ENCODE measurements at regions of chr20 and their contacts with region 1.

Region 1: DNA sequence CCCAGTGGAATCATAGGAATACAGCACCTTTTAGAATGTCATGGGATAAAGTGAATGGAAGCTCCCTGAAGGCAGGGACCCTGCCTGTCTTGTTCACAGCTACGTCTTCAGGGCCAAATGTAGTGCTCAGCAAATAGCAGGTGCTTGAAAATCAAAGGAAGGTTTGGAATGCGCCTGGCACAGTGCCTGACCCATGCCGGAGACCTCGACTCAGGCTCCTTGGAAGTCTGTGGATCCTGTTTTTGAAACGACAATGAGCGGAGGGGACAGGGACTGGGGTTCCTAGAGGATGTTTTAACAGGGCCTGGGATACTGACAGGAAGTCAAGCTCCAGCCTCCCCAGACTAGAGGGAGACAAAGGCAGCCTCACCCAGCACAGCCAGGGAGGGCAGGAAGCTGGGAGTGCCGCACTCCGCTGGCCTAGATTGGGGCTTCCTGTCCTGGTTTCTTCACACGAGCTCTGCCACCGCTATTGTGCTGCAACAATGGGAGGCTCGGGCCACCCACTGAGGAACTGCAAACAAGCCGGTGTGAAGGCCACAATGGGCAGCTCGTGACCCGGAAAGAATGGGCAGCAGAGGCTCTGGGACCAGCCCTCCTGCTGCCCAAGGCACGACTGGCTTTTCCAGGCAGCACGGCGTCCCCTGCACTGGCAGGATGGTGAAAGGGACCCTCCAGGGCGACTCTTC is 76.7 kb downstream of the PREX1 start:
- DNase-seq: peak; percentile 92
- H3K4me3 ChIP-seq: peak overlapping the region in 2 of 8 donors; percentile 12 to 56
- H3K27ac ChIP-seq: peak overlapping the region; percentile 36 to 97 (median 84)
- H3K4me1 ChIP-seq: peaks cover 26 to 99% (median 81%) of the 10 kb centered on the region in 6 donors
- H3K27me3 ChIP-seq: no peaks in the 10 kb centered on the region
- CTCF ChIP-seq: no peak
- POLR2A ChIP-seq: no peak

Region 2: DNA sequence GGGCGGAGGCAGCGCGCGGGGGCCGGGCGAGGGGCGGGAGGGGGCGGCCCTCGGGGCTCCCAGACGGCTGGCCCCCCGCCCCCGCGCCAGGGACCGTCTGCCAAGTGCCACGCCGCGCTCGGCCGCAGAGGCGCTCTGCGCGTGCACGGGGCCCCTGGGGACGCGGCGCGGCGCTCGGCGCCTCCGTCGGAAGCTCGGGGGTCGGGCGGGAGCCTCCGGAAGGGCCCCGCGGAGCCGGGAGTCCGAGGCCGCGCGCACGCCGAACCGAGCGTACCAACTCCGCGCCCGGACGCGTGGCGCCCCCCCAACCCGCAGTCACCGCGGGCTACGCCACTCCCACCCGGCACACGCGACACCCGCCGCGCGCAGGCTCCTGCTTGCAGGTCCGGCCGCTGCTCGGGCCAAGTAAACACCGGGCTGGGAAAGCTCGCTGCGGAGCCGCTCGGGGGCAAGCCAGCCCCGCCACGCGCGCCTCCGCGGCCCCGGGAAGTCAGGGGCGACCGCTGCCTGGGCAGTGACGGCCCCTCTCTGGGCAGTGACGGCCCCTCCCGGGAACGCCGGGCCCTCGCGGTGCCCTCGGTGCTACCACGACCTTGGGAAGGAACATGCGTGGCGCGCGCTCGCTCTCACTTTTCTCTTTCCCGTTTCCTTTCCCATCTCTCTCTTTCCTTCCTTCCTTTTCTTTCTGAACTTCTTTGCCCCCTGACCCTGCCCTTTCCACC is 77.1 kb after region 1 on chr20:
- intact Hi-C with region 1: loop called (anchors 10 kb)
- DNase-seq: peak; percentile 98
- H3K4me3 ChIP-seq: peak overlapping the region; percentile 58 to 96 (median 75)
- H3K27ac ChIP-seq: peak overlapping the region; percentile 65 to 97 (median 88)
- H3K4me1 ChIP-seq: peaks cover 39 to 92% (median 57%) of the 10 kb centered on the region in 6 donors
- H3K27me3 ChIP-seq: no peaks in the 10 kb centered on the region
- CTCF ChIP-seq: peak in 6 of 11 experiments; percentile 9 to 51 (median 47)
- POLR2A ChIP-seq: peak in 1 of 3 donors; percentile 47

Region 3: GRCh38 chr20:48839154-48839946 is 88.3 kb after region 1 on chr20:
- intact Hi-C with region 1: no loop called
- DNase-seq: no peak
- H3K4me3 ChIP-seq: no peak overlapping the region
- H3K27ac ChIP-seq: peak overlapping the region in 7 of 8 donors; percentile 13 to 66 (median 23)
- H3K4me1 ChIP-seq: peaks cover 0 to 25% (median 9%) of the 10 kb centered on the region in 6 donors
- H3K27me3 ChIP-seq: no peaks in the 10 kb centered on the region
- CTCF ChIP-seq: no peak
- POLR2A ChIP-seq: no peak

Measured in spleen (tissue), 13 donors.